Activated CD4-positive, alpha-beta memory T cell treated with anti-CD3 and anti-CD28 coated beads, Interleukin-2, amount 10 ng/mL, durations not matched to agents 7 days and 5 days (primary cell): ENCODE measurements at regions of chr2 and their contacts with region 1.

Region 1: GRCh38 chr2:191066197-191066918 is 52.4 kb upstream of the STAT1 start:
- DNase-seq: peak; percentile 23
- H3K4me3 Mint-ChIP-seq: peak overlapping the region; percentile 80
- H3K27ac Mint-ChIP-seq: peak overlapping the region; percentile 84
- H3K4me1 Mint-ChIP-seq: peaks cover 78% of the 10 kb centered on the region
- H3K27me3 Mint-ChIP-seq: no peaks in the 10 kb centered on the region

Region 2: DNA sequence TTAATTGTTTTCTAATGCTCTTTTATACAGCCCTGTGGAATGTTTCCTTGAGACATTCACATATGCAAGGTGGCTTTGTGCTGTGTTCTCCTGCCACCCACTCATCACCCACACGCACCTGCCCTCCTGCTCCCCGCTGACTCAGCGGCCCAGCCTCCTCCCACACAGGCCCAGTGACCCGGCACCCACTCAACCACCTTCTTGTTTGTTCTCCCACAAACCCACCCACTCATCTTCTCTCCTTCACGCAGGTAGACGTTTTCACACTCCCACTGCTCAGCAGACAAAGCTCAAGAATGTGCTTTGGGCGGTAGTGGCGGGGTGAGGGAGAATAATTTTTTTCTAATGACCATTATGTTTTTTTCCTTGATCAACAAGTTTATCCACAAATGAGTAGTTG is 503.2 kb before region 1 on chr2:
- CTCF ChIA-PET with region 1: no interaction called
- POLR2A ChIA-PET with region 1: no interaction called
- DNase-seq: no peak
- H3K4me3 Mint-ChIP-seq: no peak overlapping the region
- H3K27ac Mint-ChIP-seq: no peak overlapping the region
- H3K4me1 Mint-ChIP-seq: peaks cover 5% of the 10 kb centered on the region
- H3K27me3 Mint-ChIP-seq: no peaks in the 10 kb centered on the region

Region 3: GRCh38 chr2:190979906-190980629 is 86.3 kb before region 1 on chr2:
- CTCF ChIA-PET with region 1: no interaction called
- POLR2A ChIA-PET with region 1: no interaction called
- DNase-seq: no peak
- H3K4me3 Mint-ChIP-seq: no peak overlapping the region
- H3K27ac Mint-ChIP-seq: no peak overlapping the region
- H3K4me1 Mint-ChIP-seq: peaks cover 62% of the 10 kb centered on the region
- H3K27me3 Mint-ChIP-seq: no peaks in the 10 kb centered on the region

Region 4: DNA sequence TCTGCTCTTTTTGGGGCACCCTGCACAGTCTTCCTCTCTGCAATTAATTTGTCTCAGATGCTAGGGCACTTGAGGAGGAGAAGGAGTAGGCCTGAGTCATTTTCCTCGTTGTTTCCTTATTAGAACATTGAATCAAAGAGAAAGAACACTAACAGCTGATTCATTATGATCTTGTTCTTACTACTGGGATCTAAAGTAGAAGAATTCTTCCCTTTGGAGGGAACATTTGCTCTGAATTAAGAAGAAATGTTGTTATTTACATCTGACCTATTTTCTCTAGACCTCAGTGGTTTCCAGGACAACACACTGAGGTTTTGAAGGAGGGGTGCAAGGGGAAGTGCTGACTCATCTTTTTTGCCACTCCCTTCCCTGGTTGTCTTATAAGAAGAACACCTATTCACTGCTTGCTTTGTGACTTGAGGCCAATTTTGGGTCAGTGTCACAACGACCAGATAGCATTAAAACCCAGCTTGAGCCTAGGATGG is 28.1 kb before region 1 on chr2:
- CTCF ChIA-PET with region 1: interaction called, 4 read pairs
- POLR2A ChIA-PET with region 1: interaction called, 14 read pairs
- DNase-seq: peak; percentile 69
- H3K4me3 Mint-ChIP-seq: peak overlapping the region; percentile 29
- H3K27ac Mint-ChIP-seq: peak overlapping the region; percentile 88
- H3K4me1 Mint-ChIP-seq: peaks cover 49% of the 10 kb centered on the region
- H3K27me3 Mint-ChIP-seq: no peaks in the 10 kb centered on the region

Region 5: DNA sequence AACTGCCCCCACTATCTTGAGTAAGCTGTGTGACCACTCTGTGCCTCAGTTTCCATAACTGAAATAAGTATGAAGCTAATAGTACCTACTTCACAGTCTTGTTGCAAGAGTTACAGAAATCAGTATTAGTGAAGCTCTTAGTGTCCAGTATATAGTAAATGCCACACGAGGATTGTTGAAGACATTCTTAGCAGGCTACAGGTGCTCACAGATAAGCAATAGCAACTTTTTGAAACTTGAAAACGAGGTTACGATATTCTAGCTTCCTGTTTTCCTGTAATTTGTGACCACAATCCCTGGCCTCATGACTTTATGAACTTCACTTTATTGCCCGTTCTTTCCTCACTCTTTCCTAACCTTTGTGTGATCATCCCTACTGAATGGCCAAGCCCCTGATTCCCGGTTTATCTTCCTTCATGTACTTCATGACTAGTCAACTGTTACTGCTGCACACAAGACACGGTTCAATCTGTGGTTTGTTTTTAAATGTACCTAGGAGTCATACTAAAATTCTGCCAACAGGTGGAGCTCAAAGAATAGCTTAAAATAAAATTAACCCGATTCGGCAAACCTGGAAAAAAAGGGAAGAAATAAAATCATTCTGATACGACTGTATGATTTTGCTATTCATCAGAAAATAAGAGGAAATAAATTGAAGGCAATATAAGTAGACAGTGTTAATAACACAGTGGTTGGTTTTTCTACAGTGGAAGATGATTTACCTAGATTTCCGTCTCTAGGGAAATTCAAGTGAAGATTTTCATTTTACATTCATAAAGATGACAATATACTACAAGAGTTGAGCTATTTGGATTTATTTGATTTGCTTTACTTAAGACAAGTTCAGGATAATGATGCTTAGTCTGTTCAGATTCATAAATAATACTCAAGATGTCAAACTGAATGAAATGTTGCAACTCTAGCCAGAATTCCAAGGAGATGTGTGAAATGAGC is 14.3 kb before region 1 on chr2:
- CTCF ChIA-PET with region 1: interaction called, 59 read pairs
- POLR2A ChIA-PET with region 1: interaction called, 72 read pairs
- DNase-seq: no peak
- H3K4me3 Mint-ChIP-seq: no peak overlapping the region
- H3K27ac Mint-ChIP-seq: no peak overlapping the region
- H3K4me1 Mint-ChIP-seq: peaks cover 28% of the 10 kb centered on the region
- H3K27me3 Mint-ChIP-seq: no peaks in the 10 kb centered on the region

Region 6: DNA sequence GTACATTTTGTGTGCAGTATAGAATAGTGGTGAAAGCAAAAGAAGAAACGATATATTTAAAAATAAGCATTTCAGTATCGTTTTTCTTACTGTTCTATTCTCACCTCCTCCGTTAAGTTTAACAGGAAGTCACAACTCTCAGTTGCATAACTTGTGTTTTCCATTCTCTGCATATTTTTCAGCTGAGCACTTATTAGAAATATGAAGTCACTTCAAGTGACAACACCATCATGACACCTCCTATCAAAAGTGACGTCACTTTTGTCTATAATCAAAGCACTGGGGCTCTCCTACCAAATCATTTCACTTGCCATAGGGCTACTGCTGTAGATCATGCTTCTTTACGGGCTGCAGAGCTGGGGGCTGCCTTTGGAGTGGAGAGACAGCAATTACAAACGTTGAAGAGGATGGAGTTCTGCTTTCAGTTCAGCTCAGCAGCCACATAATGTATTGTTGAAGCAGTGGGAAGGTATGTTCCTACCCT is 48.1 kb after region 1 on chr2:
- CTCF ChIA-PET with region 1: interaction called, 4 read pairs
- POLR2A ChIA-PET with region 1: interaction called, 84 read pairs
- DNase-seq: peak; percentile 39
- H3K4me3 Mint-ChIP-seq: peak overlapping the region; percentile 61
- H3K27ac Mint-ChIP-seq: peak overlapping the region; percentile 94
- H3K4me1 Mint-ChIP-seq: peaks cover 71% of the 10 kb centered on the region
- H3K27me3 Mint-ChIP-seq: no peaks in the 10 kb centered on the region

Region 7: GRCh38 chr2:191128172-191128910 is 62.0 kb after region 1 on chr2:
- CTCF ChIA-PET with region 1: no interaction called
- POLR2A ChIA-PET with region 1: interaction called, 20 read pairs
- DNase-seq: no peak
- H3K4me3 Mint-ChIP-seq: peak overlapping the region; percentile 60
- H3K27ac Mint-ChIP-seq: peak overlapping the region; percentile 71
- H3K4me1 Mint-ChIP-seq: peaks cover 59% of the 10 kb centered on the region
- H3K27me3 Mint-ChIP-seq: no peaks in the 10 kb centered on the region